Naive thymus-derived CD4-positive, alpha-beta T cell (primary cell): ENCODE measurements at regions of chr12 and their contacts with region 1.

Region 1: GRCh38 chr12:99147130-99147529 is 500.4 kb upstream of the GARIN6 start:
- DNase-seq: no peak
- ATAC-seq: no peak
- H3K4me3 ChIP-seq: no peak overlapping the region
- H3K4me3 Mint-ChIP-seq: no peak overlapping the region
- H3K27ac ChIP-seq: no peak overlapping the region
- H3K27ac Mint-ChIP-seq: no peak overlapping the region
- H3K4me1 ChIP-seq: no peaks in the 10 kb centered on the region
- H3K4me1 Mint-ChIP-seq: no peaks in the 10 kb centered on the region
- H3K27me3 ChIP-seq: no peaks in the 10 kb centered on the region
- H3K27me3 Mint-ChIP-seq: peaks cover 0 to 5% (median 0%) of the 10 kb centered on the region in 5 donors

Region 2: DNA sequence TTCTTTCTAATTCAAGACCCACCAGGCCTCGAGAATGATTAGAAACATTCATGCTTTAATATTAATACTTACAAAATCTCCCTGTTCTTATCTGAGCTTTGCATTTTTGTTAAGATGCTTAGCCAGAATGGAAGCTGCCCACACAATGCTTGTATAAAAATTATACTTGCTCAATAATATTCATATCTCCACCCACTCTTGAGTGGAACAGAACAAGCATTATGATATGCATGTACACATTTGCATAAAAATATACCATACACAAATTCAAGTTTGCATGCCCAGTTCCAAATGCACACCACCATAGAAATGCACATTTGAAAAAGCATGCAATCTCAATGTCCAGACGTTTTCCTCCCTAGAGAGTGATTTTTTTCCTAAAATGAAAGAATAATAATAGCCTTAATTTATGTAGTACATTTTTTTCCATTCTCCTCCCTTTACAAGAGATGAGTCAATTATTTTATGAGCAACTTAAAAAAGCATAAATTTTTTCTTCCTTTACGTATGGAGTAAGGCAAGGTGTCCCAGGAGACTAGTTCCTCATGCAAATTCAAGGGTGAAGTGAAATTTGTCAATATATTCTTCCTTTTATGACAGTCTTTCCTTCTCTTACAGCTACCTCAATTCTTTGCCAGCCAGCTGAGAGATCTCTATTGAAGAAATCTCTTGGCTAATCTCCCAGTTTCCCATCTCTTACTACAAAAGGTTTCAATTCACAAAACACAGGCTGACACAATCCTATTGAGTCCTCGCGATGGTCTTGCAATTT is 187.3 kb after region 1 on chr12:
- CTCF ChIA-PET with region 1: no interaction called
- POLR2A ChIA-PET with region 1: no interaction called
- intact Hi-C with region 1: loop called in 1 of 2 experiments (anchors 10 kb)
- DNase-seq: no peak
- ATAC-seq: no peak
- H3K4me3 ChIP-seq: no peak overlapping the region
- H3K4me3 Mint-ChIP-seq: no peak overlapping the region
- H3K27ac ChIP-seq: no peak overlapping the region
- H3K27ac Mint-ChIP-seq: no peak overlapping the region
- H3K4me1 ChIP-seq: no peaks in the 10 kb centered on the region
- H3K4me1 Mint-ChIP-seq: no peaks in the 10 kb centered on the region
- H3K27me3 ChIP-seq: no peaks in the 10 kb centered on the region
- H3K27me3 Mint-ChIP-seq: no peaks in the 10 kb centered on the region

Region 3: DNA sequence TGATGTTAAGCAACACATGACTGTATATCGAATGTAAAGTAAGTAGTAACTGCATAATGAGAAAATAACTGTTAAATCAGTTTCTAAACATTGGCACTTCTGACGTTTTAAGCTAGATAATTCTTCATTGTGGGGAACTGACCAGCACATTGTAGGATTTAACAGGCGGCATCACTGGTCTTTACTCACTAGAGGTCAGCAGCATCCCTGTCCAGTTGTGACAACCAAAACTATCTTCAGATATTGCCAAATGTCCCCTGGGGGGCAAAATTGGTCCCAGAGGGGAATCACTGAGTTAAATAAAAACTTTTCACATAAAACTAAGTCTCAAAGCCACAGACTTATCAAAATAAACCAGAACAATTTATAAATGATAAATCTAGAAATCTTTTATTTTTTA is 930.2 kb after region 1 on chr12:
- CTCF ChIA-PET with region 1: no interaction called
- POLR2A ChIA-PET with region 1: no interaction called
- intact Hi-C with region 1: no loop called
- DNase-seq: no peak
- ATAC-seq: no peak
- H3K4me3 ChIP-seq: no peak overlapping the region
- H3K4me3 Mint-ChIP-seq: no peak overlapping the region
- H3K27ac ChIP-seq: no peak overlapping the region
- H3K27ac Mint-ChIP-seq: no peak overlapping the region
- H3K4me1 ChIP-seq: no peaks in the 10 kb centered on the region
- H3K4me1 Mint-ChIP-seq: no peaks in the 10 kb centered on the region
- H3K27me3 ChIP-seq: no peaks in the 10 kb centered on the region
- H3K27me3 Mint-ChIP-seq: no peaks in the 10 kb centered on the region